Activated CD4-positive, alpha-beta memory T cell treated with anti-CD3 and anti-CD28 coated beads for 36 hours (primary cell): ENCODE measurements at regions of chr16 and their contacts with region 1.

Region 1: GRCh38 chr16:9072806-9073341 is 18.6 kb upstream of the HAPSTR1 start:
- DNase-seq: peak; percentile 69
- H3K4me3 Mint-ChIP-seq: peak overlapping the region; percentile 46
- H3K27ac Mint-ChIP-seq: peak overlapping the region; percentile 92
- H3K4me1 Mint-ChIP-seq: peaks cover 46% of the 10 kb centered on the region
- H3K27me3 Mint-ChIP-seq: peaks cover 2% of the 10 kb centered on the region

Region 2: DNA sequence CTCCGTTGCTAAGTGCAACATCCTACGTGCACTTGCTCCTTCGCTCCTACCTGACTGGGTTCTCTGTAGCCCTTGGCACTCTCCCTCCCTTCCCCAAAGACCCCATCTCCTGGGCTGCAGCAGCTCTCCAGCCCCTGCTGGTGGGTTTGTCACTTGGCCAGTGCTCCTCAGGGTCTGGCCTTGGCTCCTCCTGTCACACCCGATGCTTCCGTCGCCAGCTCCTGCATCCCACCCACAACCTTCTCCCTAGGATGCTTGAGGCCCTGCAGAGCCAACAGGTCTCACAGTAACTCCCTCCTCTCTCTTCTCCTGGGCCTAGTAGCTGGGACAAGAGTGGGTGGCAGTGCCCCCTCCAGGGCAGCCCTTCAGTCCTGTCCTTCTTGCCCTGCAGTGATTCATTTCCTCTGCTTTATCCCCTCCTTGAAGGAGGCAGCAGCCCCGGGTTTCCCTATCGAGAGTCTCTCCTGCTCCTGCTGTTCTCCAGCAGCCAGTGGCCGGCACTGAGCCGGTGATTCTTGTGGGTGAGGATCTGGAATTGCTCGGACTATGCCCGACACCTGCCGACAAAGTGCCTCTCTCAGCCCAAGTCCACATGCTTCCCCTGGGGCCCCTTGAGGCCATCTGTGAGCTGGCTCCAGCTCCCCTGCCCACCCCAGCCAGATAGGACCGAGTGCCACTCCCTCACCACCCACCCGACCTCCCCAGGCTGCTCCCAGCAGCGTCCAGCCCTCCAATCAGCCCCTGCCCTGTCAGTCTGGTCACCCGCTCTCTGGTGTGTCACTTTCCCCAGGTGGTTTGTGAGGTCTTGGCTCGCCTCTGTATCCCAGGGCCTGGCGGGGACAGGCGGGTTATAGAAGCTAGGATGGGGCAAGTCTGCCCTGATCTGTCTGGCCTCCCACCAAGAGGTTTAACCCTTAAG is 186.9 kb before region 1 on chr16:
- CTCF ChIA-PET with region 1: no interaction called
- POLR2A ChIA-PET with region 1: interaction called, 3 read pairs
- intact Hi-C with region 1: loop called (anchors 1 kb)
- DNase-seq: peak; percentile 26
- H3K4me3 Mint-ChIP-seq: no peak overlapping the region
- H3K27ac Mint-ChIP-seq: no peak overlapping the region
- H3K4me1 Mint-ChIP-seq: peaks cover 20% of the 10 kb centered on the region
- H3K27me3 Mint-ChIP-seq: peaks cover 3% of the 10 kb centered on the region

Region 3: DNA sequence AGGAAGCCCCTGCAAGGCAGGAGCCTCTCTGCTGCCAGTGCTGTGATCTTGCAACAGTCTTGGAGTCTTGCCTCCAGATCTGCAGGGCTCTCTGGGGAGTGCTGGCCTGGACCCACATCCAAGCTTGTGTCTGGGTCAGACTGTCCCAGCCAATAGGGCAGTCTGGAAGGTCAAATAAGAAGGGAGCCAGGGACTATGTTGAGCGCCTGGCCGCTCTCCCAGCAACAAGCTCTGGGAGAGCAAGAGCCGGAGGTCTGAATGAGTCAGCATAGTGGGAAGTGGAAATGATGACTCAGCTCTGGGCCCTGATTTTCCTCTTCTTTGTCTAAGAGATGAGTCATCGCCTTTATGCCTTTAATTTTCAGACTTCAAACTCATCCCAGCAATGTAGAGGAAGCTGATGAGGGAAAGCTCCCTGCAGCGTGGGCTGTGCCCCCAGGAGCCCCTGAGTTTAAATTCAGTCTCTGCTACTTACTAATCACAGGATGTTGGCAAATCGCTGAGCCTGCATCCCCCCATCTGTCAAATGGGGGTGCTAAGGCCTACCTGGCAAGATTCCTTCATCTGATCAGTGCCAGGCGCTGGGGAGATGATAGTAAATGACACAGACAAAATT is 25.1 kb before region 1 on chr16:
- CTCF ChIA-PET with region 1: no interaction called
- POLR2A ChIA-PET with region 1: interaction called, 11 read pairs
- intact Hi-C with region 1: loop called (anchors 1 kb)
- DNase-seq: peak; percentile 81
- H3K4me3 Mint-ChIP-seq: no peak overlapping the region
- H3K27ac Mint-ChIP-seq: peak overlapping the region; percentile 66
- H3K4me1 Mint-ChIP-seq: peaks cover 37% of the 10 kb centered on the region
- H3K27me3 Mint-ChIP-seq: no peaks in the 10 kb centered on the region

Region 4: DNA sequence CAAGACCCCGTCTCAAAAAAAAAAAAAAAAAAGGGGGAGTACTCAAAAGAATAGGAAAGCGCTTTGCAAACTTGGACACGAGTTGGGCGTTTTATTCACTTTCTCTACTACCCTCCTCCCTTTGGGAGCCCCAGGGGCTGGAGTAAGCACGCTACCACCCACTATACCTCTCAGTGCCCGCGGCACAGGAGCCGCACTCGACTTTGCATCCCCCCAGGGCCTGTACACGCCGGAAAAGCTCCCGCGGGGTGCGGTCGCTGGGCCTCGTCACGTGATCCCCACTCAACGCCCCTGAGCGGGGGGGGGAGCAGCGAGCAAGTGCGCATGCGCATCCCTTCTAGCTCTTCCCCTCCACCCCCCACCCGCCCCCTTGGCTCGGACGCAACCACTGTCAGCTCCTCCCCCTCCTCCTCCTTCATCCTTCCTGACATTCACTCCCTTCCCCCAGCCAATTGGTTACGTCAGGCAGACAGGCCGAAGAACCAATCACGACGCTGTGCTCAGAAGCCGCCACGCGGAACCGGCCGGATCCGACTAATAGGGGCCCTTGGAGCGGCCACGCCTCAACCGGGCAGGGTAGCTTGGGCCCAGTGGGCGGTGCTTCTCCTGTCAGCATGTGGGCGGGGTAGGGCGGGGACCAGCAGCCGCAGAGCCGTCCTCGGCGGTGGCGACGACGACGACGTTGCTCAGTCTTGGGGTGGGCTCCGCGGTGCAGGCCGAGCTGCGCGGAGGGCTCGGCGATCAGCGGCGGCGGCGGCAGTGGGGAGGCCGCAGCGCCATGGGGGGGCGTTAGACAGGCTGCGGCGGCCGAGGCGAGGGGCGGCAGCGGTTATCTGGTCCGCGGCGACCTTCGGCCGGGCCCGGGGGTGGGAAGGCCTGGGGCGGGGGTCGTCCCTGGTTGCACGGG is 18.3 kb after region 1 on chr16 and contains the start of gene HAPSTR1:
- CTCF ChIA-PET with region 1: interaction called, 12 read pairs
- POLR2A ChIA-PET with region 1: interaction called, 28 read pairs
- intact Hi-C with region 1: no loop called
- DNase-seq: peak; percentile 100
- H3K4me3 Mint-ChIP-seq: peak within 1 kb of the TSS; percentile 94
- H3K27ac Mint-ChIP-seq: peak within 1 kb of the TSS; percentile 95
- H3K4me1 Mint-ChIP-seq: peaks cover 29% of the 10 kb centered on the region
- H3K27me3 Mint-ChIP-seq: no peaks in the 10 kb centered on the region
- total RNA-seq, gene HAPSTR1: 47.1 to 49.1 TPM

Region 5: GRCh38 chr16:9125658-9126505 is 53.0 kb after region 1 on chr16:
- CTCF ChIA-PET with region 1: no interaction called
- POLR2A ChIA-PET with region 1: interaction called, 3 read pairs
- intact Hi-C with region 1: loop called (anchors 2 kb)
- DNase-seq: no peak
- H3K4me3 Mint-ChIP-seq: no peak overlapping the region
- H3K27ac Mint-ChIP-seq: peak overlapping the region; percentile 38
- H3K4me1 Mint-ChIP-seq: peaks cover 53% of the 10 kb centered on the region
- H3K27me3 Mint-ChIP-seq: no peaks in the 10 kb centered on the region